Posterior vena cava (tissue), 2 donors: ENCODE measurements at regions of chr2 and their contacts with region 1.

Region 1: DNA sequence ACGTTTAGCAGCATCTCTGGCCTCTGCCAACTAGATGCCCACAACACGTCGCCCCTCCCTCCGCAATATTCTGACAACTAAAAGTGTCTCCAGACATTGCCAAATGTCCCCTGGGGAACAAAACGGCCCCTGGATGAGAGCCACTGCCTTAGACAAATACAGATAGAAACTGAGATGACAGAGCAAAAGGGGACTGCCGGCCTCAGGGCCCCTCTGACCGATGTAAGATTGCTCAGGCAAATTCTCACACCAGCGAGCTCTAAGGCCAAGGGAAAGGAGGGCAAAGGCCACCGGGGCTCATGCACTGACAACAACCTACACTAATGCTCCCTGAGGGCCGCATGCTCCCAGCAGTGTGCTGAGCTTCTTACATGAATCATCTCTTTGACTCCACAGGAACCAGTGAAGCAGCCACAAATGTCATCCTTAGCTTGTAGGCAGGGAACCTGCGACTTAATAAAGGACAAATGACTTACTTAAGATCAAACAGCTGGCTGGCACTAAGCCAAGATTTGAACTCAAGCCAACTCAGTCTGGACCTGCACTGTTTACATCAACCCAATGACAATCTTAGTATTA is 228.5 kb downstream of the TTC32 start:
- DNase-seq: no peak

Region 2: GRCh38 chr2:18871430-18871829 is 801.9 kb before region 1 on chr2:
- intact Hi-C with region 1: loop called in 1 of 2 experiments (anchors 10 kb)
- DNase-seq: no peak

Region 3: GRCh38 chr2:19532547-19533196 is 140.6 kb before region 1 on chr2:
- intact Hi-C with region 1: no loop called
- DNase-seq: no peak

Region 4: DNA sequence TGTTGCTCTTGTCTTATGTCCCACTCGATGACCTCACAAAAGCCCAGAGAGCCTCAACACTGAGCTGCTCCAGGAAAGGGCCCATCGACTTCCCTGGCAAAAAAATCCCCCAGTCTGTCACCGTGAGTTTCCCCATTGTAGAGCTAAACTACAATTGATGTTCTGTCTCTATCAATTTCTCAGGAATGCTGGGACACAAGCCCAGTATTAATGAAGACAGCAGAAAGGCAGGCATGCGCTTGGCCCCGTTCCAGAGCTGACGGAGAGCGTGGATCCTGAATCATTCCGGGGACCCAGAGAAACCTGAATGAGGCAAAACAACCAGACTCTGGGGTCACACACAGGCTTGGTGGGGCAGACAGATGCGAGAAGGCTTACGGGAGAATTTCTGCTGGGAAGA is 81.6 kb after region 1 on chr2:
- intact Hi-C with region 1: no loop called
- DNase-seq: no peak

Region 5: GRCh38 chr2:19823507-19823906 is 150.2 kb after region 1 on chr2:
- intact Hi-C with region 1: no loop called
- DNase-seq: no peak